Activated CD8-positive, alpha-beta T cell treated with anti-CD3 and anti-CD28 coated beads, Interleukin-2, amount 10 ng/mL, durations not matched to agents 7 days and 5 days (primary cell): ENCODE measurements at regions of chr16 and their contacts with region 1.

Region 1: DNA sequence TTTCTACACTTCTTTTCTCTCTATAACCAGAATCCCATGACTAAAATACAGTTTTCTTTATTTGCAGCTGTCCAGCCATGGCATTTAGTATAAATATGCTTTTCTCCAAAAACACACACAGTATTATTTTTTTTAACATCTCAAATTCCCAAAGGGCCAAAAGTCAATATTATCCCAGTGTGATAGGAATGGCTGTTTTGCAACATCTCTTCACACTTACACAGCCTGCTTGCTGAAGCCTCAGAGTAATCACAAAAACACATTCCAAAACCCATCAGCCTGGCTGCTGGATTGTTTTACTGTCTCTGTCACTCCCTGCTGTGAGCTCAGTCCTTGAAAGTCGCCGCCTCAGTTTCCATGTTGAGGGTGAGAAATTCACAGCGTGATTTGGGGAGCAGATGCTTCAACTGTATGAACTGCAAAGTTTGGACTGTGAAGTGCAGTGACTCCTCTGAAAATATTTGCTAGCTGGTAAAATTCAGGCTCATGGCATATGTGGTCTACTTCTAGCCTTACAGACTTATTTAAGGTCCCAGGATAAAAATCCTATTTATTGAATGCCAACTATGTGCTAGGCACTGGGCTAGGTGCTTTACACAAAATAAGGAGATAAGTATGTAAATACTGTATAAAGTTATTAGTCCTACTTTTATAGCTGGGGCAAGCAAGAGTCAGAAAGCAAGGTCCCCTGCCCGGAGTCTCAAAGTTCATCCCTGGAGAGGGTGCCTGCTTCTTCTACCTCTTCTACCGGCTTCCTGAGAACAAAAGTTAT is 116.5 kb downstream of the SOCS1 start:
- DNase-seq: no peak
- ATAC-seq: no peak
- H3K4me3 Mint-ChIP-seq: peak overlapping the region; percentile 57
- H3K27ac Mint-ChIP-seq: peak overlapping the region; percentile 88
- H3K4me1 Mint-ChIP-seq: peaks cover 93% of the 10 kb centered on the region
- H3K27me3 Mint-ChIP-seq: no peaks in the 10 kb centered on the region

Region 2: DNA sequence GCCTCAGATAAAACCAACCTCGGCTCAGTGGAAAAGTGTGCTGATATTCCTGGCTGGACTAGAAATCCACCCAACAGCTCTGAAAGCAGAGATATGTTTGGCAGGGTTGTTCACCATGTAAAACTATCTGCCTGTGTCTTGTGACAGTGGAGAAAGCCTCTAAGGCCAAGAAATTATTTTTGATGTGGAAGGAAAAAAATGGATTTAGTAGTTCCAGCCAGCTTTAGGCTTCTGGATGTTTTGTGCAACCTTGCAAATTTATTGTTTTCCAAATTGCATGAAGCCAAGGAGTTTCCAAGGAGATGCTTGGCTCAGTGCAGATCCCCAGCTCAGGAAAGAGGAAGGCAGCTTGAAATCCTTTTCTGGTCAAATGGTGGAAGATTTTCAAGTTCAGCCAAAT is 476.4 kb before region 1 on chr16:
- CTCF ChIA-PET with region 1: no interaction called
- POLR2A ChIA-PET with region 1: no interaction called
- DNase-seq: no peak
- ATAC-seq: no peak
- H3K4me3 Mint-ChIP-seq: no peak overlapping the region
- H3K27ac Mint-ChIP-seq: no peak overlapping the region
- H3K4me1 Mint-ChIP-seq: no peaks in the 10 kb centered on the region
- H3K27me3 Mint-ChIP-seq: peaks cover 5% of the 10 kb centered on the region

Region 3: DNA sequence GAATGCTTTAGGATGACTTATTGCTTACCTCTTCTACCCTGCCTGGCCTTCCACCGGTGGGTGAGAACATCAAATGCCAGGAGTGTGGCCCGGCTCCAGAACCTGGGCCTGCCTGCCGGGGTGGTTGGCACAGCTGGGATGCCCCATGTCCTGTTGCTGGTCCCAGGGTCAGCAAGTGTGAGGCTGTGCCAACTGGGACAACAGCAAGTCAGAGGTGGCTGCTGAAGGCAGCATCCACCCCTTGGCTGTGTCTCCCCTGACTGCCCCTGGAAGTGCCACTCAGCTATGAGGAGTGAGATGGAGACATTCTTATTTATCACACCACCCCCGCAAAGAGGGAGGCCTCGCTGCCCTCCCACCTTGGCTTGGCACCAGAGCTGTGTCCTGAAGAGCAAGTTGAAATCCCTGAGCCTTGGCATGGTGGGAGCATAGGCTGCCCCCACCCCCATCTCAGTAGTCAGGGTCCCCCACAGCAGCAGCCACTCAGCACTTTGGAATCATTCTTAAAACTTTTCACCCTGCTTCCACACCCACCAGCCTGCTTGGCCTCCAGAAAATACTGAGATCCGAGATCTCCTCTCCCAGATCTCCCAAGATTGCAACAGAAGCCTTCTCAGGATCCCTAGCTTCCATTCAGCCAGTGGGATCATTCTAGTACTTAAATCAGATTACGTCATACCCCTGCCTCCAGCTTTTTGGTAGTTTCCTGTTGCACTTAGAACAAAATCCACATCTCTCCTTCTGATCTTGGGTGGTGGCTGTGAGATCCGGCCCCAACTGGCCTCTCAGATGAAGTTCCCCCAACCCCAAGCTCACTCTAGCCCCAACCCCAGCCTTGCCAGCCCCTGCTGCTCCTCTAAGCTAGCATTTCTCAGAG is 11.0 kb before region 1 on chr16:
- CTCF ChIA-PET with region 1: interaction called, 10 read pairs
- POLR2A ChIA-PET with region 1: interaction called, 3 read pairs
- DNase-seq: peak; percentile 63
- ATAC-seq: peak; percentile 76
- H3K4me3 Mint-ChIP-seq: peak overlapping the region; percentile 28
- H3K27ac Mint-ChIP-seq: peak overlapping the region; percentile 93
- H3K4me1 Mint-ChIP-seq: peaks cover 81% of the 10 kb centered on the region
- H3K27me3 Mint-ChIP-seq: no peaks in the 10 kb centered on the region

Region 4: GRCh38 chr16:11161974-11162373 is 22.5 kb after region 1 on chr16:
- CTCF ChIA-PET with region 1: interaction called, 10 read pairs
- POLR2A ChIA-PET with region 1: interaction called, 3 read pairs
- DNase-seq: no peak
- ATAC-seq: no peak
- H3K4me3 Mint-ChIP-seq: no peak overlapping the region
- H3K27ac Mint-ChIP-seq: peak overlapping the region; percentile 81
- H3K4me1 Mint-ChIP-seq: peaks cover 95% of the 10 kb centered on the region
- H3K27me3 Mint-ChIP-seq: no peaks in the 10 kb centered on the region